ENCODE measurements at regions of chr3 and their contacts with region 1.

Region 1: DNA sequence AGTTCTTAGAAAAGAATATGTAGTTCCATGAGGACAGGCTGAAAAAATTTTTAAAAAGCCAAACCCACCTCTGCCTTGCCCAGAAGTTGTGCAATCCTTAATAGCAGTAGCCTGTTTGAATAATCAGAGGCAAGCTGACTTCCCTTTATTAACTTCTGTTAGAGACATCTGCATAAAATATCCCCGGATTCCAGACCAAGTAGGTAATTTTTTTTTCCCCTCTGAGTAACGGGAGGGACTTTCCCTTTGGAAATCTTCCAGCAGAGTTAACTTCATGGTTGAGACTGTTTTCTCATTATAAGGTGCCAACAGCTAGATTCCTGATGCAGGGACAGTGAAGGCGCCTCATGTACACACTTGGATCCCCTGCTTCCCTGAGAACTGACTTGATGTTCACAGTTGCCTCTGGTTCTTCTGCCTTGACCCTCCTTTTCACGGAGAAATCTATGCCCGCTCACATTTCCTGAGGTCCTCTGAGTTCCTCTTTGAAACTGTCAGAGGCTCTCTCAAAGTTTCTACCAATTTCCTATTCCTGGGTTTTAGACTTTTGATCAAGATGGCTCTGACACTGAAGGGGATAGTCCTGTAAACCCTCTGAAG is 227.6 kb upstream of the BHLHE40 start:
- DNase-seq: peak; percentile 58 to 92 (median 85)
- H3K4me3 ChIP-seq: peak overlapping the region; percentile 9 to 67 (median 30)
- H3K4me3 Mint-ChIP-seq: peak overlapping the region; percentile 66 to 77
- H3K27ac ChIP-seq: peak overlapping the region; percentile 78 to 95
- H3K27ac Mint-ChIP-seq: peak overlapping the region; percentile 92 to 99 (median 96)
- H3K4me1 ChIP-seq: peaks cover 70 to 75% of the 10 kb centered on the region in 2 donors
- H3K4me1 Mint-ChIP-seq: peaks cover 87% of the 10 kb centered on the region
- H3K27me3 ChIP-seq: no peaks in the 10 kb centered on the region
- H3K27me3 Mint-ChIP-seq: peaks cover 0 to 3% (median 3%) of the 10 kb centered on the region in 3 donors
- CTCF ChIP-seq: no peak

Region 2: GRCh38 chr3:4814305-4814903 is 62.8 kb after region 1 on chr3:
- intact Hi-C with region 1: loop called in 1 of 2 experiments (anchors 5 kb)
- DNase-seq: peak; percentile 53 to 63 (median 62)
- H3K4me3 ChIP-seq: peak overlapping the region in 1 of 3 experiments; percentile 58
- H3K4me3 Mint-ChIP-seq: peak overlapping the region; percentile 74 to 92
- H3K27ac ChIP-seq: peak overlapping the region in 1 of 2 donors; percentile 49
- H3K27ac Mint-ChIP-seq: peak overlapping the region; percentile 69 to 91 (median 82)
- H3K4me1 ChIP-seq: peaks cover 11 to 13% of the 10 kb centered on the region in 2 donors
- H3K4me1 Mint-ChIP-seq: peaks cover 22% of the 10 kb centered on the region
- H3K27me3 ChIP-seq: no peaks in the 10 kb centered on the region
- H3K27me3 Mint-ChIP-seq: no peaks in the 10 kb centered on the region
- CTCF ChIP-seq: no peak

Region 3: DNA sequence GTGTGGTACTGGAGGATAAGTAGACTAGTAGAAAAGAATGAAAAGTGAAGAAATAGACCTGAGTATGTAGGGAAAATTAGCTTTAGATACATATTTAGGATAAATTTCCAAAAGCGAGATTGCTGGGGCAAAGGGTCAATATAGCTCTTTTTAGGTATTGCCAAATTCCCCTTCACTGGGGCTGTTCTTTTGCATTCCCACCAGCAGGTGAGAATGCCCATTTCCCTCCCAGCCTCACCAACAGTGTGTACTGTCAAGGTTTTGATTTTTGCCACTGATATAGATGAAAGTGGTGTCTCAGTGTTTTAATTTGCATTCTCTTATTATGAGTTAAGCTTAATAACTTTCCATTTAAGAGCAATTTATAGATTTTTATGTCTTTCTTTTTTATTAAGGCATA is 192.0 kb after region 1 on chr3:
- intact Hi-C with region 1: no loop called
- DNase-seq: no peak
- H3K4me3 ChIP-seq: no peak overlapping the region
- H3K4me3 Mint-ChIP-seq: no peak overlapping the region
- H3K27ac ChIP-seq: no peak overlapping the region
- H3K27ac Mint-ChIP-seq: peak overlapping the region in 1 of 7 donors; percentile 36
- H3K4me1 ChIP-seq: no peaks in the 10 kb centered on the region
- H3K4me1 Mint-ChIP-seq: no peaks in the 10 kb centered on the region
- H3K27me3 ChIP-seq: no peaks in the 10 kb centered on the region
- H3K27me3 Mint-ChIP-seq: no peaks in the 10 kb centered on the region
- CTCF ChIP-seq: no peak